ENCODE measurements at regions of chr9 and their contacts with region 1.

Region 1: DNA sequence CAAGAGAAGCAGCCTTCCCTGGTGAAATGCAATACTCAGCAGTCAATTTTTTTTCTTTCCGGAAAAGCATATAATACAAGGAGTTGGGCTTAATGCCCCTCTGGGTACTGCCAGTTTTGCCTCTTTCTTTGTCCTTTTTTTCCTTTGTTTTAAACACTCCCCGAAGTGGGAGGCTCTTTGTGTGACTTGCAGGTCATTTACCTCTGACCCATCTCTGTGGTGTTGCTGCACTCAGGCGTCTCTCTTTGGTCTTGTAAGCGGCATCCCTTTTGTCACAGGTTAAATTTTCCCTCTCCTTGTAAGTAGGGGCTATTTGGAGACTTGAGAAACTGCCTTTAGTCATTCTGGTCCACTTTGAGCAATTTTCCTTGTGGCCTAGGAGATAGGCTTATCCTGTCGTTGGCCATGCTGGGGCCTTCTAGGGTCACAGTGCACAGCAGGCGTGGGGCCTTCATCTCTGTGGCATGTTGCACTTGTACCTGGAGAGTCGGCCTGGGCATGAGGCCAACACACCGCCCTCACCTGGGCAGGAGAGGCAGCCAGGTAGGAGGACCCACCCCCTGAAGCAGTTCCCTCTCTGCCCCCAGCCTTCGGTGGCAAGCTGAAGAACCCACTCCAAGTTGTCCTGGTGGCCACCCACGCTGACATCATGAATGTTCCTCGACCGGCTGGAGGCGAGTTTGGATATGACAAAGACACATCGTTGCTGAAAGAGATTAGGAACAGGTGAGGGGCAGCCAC is 27.7 kb upstream of the CTSL start:
- DNase-seq: no peak
- H3K4me3 ChIP-seq: no peak overlapping the region
- H3K27ac ChIP-seq: no peak overlapping the region
- H3K4me1 ChIP-seq: no peaks in the 10 kb centered on the region
- H3K27me3 ChIP-seq: no peaks in the 10 kb centered on the region
- CTCF ChIP-seq: no peak
- EP300 ChIP-seq: no peak
- POLR2A ChIP-seq: no peak

Region 2: GRCh38 chr9:87803622-87804345 is 105.5 kb after region 1 on chr9:
- in situ Hi-C with region 1: loop called in 1 of 4 experiments (anchors 10 kb)
- intact Hi-C with region 1: no loop called
- DNase-seq: no peak
- H3K4me3 ChIP-seq: no peak overlapping the region
- H3K27ac ChIP-seq: no peak overlapping the region
- H3K4me1 ChIP-seq: no peaks in the 10 kb centered on the region
- H3K27me3 ChIP-seq: peaks cover 4% of the 10 kb centered on the region
- CTCF ChIP-seq: no peak
- EP300 ChIP-seq: no peak
- POLR2A ChIP-seq: no peak

Measured in transverse colon (tissue), 4 donors.